Psoas muscle (tissue), 8 donors: ENCODE measurements at regions of chr3 and their contacts with region 1.

Region 1: DNA sequence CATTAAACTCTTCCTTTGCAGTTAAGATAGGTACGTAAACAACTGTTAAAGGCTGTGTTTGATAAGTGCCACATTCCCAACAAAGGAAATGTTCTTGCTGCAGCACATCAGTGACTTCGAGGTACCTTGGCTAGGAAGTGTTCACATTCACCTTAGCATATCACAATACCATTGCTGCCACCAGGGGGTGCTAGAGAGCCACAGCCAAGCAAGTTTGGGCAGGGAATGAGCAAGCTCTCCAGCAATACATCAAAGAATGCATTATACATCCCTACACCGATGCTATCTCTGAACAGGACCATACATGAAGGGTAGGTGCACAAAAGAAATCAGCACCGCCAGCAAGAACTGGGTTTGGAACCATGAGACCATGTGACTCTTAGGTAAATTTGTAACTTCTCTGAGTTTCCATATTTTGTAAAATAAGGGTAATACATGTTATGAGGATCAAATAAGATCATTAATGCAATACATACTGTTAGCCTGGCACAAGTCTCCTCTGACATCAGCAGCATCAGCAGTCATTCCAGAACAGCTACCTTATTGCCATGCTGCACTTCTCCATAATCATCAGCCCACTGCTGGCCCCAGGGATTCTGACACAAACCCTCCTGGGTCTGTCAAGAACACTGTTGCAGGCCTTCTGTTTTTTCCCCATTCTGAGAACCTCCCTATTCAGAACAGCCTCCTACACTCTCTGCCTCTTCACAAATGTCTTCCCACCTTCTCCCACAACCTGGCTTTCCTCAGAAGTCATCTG is 37.6 kb downstream of the RYK start:
- DNase-seq: peak; percentile 76 to 85
- ATAC-seq: peak; percentile 85 to 91 (median 89)
- H3K4me3 ChIP-seq: no peak overlapping the region
- H3K27ac ChIP-seq: no peak overlapping the region
- H3K4me1 ChIP-seq: peaks cover 9% of the 10 kb centered on the region
- H3K27me3 ChIP-seq: no peaks in the 10 kb centered on the region
- CTCF ChIP-seq: peak; percentile 98

Region 2: DNA sequence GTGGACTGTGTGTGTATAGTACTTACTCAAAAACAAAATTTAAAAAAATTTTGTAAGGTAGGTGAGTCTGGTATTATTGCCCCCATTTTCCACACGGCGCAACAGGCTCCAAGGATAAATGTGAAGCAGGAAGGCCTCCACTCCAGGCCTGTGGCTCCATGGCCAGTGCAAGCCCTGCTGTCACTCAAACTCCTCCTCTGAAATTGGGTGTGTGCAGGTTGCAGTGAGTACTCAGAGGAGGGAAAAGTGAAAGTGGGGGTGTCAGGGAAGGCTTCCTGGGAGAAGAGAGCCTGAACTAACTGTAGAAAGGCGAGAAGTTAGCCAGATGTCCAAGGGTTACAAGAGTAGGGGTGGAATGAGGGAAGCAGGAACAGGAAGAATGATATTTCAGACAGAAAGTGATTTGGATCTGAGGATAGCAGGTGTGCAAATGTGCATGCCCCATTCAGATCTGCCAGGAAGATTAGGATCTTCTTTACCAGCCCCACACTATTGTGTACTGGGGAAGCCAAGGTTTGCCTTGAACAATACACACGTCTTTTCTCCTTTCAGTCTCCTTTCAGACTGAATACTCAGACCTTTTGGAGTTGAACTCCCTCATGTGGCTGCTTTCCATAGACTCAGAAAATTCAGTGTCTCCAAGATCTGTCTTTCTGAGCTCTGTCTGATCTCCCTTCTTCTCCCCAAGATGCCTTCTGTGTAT is 86.2 kb after region 1 on chr3:
- intact Hi-C with region 1: loop called in 1 of 2 experiments (anchors 2 kb)
- DNase-seq: no peak
- ATAC-seq: peak; percentile 23 to 56 (median 38)
- H3K4me3 ChIP-seq: no peak overlapping the region
- H3K27ac ChIP-seq: no peak overlapping the region
- H3K4me1 ChIP-seq: no peaks in the 10 kb centered on the region
- H3K27me3 ChIP-seq: no peaks in the 10 kb centered on the region
- CTCF ChIP-seq: no peak

Region 3: DNA sequence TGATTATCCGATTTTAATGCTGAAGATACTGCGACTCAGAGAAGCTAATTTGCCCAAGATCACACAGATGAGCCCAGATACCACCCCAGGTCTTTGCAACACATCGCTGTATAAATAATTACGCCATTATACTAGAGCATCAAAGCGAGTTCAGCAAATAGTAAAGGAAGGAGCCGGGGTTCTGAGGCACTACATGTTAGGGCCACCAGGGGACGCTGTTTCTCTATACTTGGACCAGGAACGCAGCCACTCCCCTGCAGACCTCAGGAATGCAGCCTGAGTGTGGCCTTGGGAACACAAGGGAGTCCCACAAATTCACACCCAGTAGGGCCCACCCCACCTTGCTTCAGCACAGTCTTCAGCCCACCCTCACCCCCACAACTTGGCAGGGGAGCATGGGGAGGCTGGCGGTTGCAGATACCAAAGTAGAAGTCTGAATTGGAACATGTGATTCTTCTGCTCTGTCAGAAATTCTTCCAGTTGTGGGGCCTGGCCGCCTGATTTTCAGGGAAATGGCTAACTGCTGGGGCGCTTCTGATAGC is 95.3 kb after region 1 on chr3:
- intact Hi-C with region 1: loop called in 1 of 2 experiments (anchors 5 kb)
- DNase-seq: peak; percentile 85 to 87
- ATAC-seq: peak; percentile 65 to 79 (median 74)
- H3K4me3 ChIP-seq: peak overlapping the region; percentile 29
- H3K27ac ChIP-seq: peak overlapping the region; percentile 72
- H3K4me1 ChIP-seq: peaks cover 31% of the 10 kb centered on the region
- H3K27me3 ChIP-seq: no peaks in the 10 kb centered on the region
- CTCF ChIP-seq: peak; percentile 100

Region 4: GRCh38 chr3:134373994-134374790 is 161.1 kb after region 1 on chr3 and contains the start of gene AMOTL2:
- intact Hi-C with region 1: loop called in 1 of 2 experiments (anchors 5 kb)
- DNase-seq: peak; percentile 90 to 96
- ATAC-seq: peak; percentile 85 to 92 (median 90)
- H3K4me3 ChIP-seq: peak within 1 kb of the TSS; percentile 86
- H3K27ac ChIP-seq: peak within 1 kb of the TSS; percentile 93
- H3K4me1 ChIP-seq: peaks cover 50% of the 10 kb centered on the region
- H3K27me3 ChIP-seq: no peaks in the 10 kb centered on the region
- CTCF ChIP-seq: no peak
- total RNA-seq, gene AMOTL2: 16.5 to 36.6 (median 29.6) TPM

Region 5: DNA sequence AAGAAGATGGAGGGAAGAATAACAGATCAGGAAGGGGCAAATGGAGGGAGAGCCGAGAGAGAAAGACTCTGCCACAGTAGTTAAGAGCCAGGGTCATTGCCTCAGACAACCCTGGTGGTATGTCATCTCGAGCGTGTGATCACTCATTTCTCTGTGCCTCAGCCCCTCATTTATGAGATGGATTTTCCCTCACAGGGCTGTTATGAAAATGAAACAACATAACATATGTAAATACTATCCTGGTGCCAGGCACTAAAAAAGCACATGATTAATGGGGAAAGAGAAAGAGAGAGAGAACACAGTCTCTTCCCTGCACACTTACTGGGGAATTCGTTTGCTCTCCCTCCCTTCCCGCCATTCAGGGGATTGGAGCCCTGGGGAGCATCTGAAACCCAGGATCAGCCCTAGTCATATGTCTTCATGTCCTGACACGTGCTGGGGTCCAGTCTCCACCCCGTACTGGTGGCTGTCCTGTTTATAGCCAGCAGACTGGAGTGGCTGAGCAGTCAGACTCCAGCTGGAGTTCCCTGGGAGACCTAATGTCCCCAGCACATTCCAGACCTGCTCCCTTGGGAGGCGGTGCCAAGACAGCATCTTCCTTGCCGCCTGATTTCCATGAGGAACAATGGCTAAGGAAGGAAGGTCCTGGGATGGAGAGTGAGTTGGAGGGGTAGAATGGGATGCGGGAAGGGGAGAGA is 175.9 kb after region 1 on chr3:
- intact Hi-C with region 1: loop called in 1 of 2 experiments (anchors 5 kb)
- DNase-seq: no peak
- ATAC-seq: no peak
- H3K4me3 ChIP-seq: no peak overlapping the region
- H3K27ac ChIP-seq: no peak overlapping the region
- H3K4me1 ChIP-seq: no peaks in the 10 kb centered on the region
- H3K27me3 ChIP-seq: peaks cover 0 to 4% (median 0%) of the 10 kb centered on the region in 3 donors
- CTCF ChIP-seq: no peak

Region 6: GRCh38 chr3:134473868-134474546 is 260.9 kb after region 1 on chr3:
- intact Hi-C with region 1: loop called in 1 of 2 experiments (anchors 5 kb)
- DNase-seq: peak in 1 of 2 donors; percentile 45
- ATAC-seq: peak; percentile 44 to 70 (median 46)
- H3K4me3 ChIP-seq: no peak overlapping the region
- H3K27ac ChIP-seq: no peak overlapping the region
- H3K4me1 ChIP-seq: peaks cover 18% of the 10 kb centered on the region
- H3K27me3 ChIP-seq: no peaks in the 10 kb centered on the region
- CTCF ChIP-seq: peak; percentile 88

Region 7: GRCh38 chr3:134685929-134686802 is 473.1 kb after region 1 on chr3:
- intact Hi-C with region 1: no loop called
- DNase-seq: no peak
- ATAC-seq: peak; percentile 81 to 90 (median 86)
- H3K4me3 ChIP-seq: no peak overlapping the region
- H3K27ac ChIP-seq: peak overlapping the region; percentile 66
- H3K4me1 ChIP-seq: peaks cover 27% of the 10 kb centered on the region
- H3K27me3 ChIP-seq: no peaks in the 10 kb centered on the region
- CTCF ChIP-seq: no peak